ENCODE measurements at regions of chr2 and their contacts with region 1.

Region 1: DNA sequence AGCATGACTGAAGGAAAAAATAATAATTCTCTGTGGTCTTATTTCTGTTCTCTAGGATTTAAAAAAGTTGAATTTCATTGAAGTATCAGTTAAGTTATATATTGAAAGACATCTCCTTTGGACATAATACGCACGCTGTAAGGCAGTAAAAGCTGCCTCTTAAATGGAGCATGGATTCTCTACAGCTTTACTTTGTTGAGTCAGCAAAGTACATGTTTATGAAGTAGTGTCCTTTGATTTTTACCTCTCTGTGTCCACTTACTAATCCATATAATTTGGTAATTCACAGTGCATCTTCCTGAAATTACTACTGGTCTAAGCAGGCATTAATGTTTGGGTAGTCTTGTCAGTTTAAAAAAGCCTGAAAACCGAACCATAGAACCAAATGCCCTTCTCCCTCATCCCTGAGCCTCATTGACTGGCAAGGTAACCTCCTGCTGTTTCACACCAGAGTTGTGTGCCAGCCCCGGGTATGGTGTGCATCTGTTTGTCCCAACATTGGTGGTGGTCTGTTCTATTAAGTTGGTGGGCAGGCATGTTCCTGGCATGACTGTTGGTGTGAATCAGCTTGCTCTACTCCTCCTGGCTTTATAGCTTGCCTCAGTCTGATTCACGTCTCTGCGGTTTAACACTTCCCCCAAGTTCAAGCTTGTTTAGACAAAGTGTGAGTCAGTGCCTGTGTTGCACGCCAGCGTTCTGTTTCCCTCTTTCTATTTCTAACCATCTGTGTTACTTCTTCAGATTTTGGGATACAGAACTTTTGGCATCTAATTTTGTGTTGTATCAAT is 71.0 kb upstream of the ITM2C start:
- DNase-seq: peak; percentile 62 to 90
- ATAC-seq: peak; percentile 91 to 98 (median 97)
- H3K4me3 ChIP-seq: no peak overlapping the region
- H3K4me3 Mint-ChIP-seq: peak overlapping the region; percentile 80
- H3K27ac ChIP-seq: peak overlapping the region; percentile 36
- H3K27ac Mint-ChIP-seq: peak overlapping the region; percentile 72 to 79
- H3K4me1 ChIP-seq: peaks cover 21% of the 10 kb centered on the region
- H3K4me1 Mint-ChIP-seq: peaks cover 51% of the 10 kb centered on the region in 2 donors
- H3K27me3 ChIP-seq: no peaks in the 10 kb centered on the region
- H3K27me3 Mint-ChIP-seq: no peaks in the 10 kb centered on the region
- CTCF ChIP-seq: no peak

Region 2: GRCh38 chr2:230712443-230713330 is 81.1 kb before region 1 on chr2 and contains the start of gene CAB39:
- intact Hi-C with region 1: loop called (anchors 1 kb)
- DNase-seq: peak; percentile 88 to 95
- ATAC-seq: peak; percentile 86 to 96 (median 92)
- H3K4me3 ChIP-seq: peak within 1 kb of the TSS; percentile 81
- H3K4me3 Mint-ChIP-seq: peak within 1 kb of the TSS; percentile 98
- H3K27ac ChIP-seq: peak within 1 kb of the TSS; percentile 59
- H3K27ac Mint-ChIP-seq: peak within 1 kb of the TSS; percentile 92 to 95
- H3K4me1 ChIP-seq: peaks cover 35% of the 10 kb centered on the region
- H3K4me1 Mint-ChIP-seq: peaks cover 40 to 46% of the 10 kb centered on the region in 2 donors
- H3K27me3 ChIP-seq: no peaks in the 10 kb centered on the region
- H3K27me3 Mint-ChIP-seq: no peaks in the 10 kb centered on the region
- CTCF ChIP-seq: peak; percentile 75
- total RNA-seq, gene CAB39: 75.4 to 96.5 (median 90.5) TPM

Region 3: DNA sequence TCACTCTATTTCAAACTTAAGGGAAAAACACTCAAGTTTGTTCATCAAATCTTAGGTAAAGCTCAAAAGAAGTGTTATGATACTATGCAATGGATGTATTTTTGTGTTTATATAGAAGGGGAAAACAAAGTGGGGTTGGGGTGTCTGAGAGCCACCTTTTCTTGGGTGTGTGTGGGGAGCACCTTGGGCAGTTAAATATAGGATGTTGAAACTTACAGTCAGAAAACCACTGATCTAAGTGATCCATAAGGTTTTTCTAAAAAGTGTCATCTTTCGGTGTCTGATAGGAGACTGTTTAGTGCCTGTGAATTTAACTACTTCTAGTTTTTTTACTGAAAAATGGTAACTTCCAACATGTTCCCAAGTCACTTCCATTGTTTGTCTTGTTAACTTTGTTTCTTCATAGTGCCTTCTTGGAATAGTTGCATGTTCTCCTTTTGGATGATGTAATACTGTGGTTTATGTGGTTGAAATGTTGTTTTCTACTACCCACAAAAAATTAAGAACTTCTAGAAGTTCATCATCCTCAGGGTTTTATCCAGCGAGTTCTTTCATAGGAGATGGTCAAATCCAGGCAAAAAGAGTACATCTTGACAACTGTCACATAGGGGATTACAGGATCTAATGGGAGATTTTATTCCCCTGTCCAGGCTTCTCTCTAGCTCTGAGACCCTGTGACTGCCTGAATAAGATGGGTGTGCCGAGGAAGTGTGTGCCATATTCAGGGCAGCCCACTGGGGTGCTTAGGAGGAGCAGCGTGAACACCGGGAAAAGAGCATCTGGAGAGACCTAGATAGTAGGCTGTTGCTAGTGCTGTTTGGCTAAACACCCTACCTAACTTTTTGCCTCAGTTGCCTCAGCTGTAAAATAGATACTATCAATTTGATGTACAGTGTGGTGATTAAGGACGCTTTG is 34.9 kb before region 1 on chr2:
- intact Hi-C with region 1: loop called (anchors 2 kb)
- DNase-seq: no peak
- ATAC-seq: no peak
- H3K4me3 ChIP-seq: no peak overlapping the region
- H3K4me3 Mint-ChIP-seq: peak overlapping the region; percentile 63
- H3K27ac ChIP-seq: no peak overlapping the region
- H3K27ac Mint-ChIP-seq: peak overlapping the region; percentile 45 to 84
- H3K4me1 ChIP-seq: peaks cover 30% of the 10 kb centered on the region
- H3K4me1 Mint-ChIP-seq: peaks cover 61 to 65% of the 10 kb centered on the region in 2 donors
- H3K27me3 ChIP-seq: no peaks in the 10 kb centered on the region
- H3K27me3 Mint-ChIP-seq: no peaks in the 10 kb centered on the region
- CTCF ChIP-seq: no peak

Region 4: DNA sequence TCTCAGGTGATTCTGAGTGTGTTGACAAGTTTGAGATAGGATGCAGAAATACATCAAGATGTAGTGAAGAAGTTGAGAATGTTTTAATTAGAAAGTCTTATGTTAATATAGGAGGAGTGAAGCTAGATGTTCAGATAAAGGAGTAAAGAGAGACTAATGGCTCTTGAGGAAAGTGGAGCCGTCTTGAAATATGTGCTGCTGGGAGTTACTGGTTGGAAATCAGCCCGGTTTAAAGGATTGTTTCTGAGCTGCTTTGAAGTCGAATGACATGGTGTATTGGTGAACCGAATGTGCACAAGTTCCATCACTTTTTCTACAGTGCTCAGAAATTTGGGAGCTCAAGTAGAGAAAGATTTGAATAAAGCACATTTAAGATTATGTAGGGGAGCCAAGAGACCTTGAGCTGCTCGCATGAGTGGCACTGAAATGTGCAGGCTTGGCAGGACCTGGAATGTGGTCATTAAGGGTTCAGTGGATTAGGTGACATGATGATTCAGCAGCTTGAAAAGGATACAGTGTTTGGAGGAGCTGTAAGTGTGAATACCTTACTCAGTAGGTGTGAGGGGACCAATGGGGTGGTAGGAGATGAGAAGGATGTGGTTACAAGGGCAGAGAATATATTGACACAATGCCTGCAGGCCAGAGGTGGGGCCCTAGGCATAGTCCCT is 12.5 kb before region 1 on chr2:
- intact Hi-C with region 1: loop called (anchors 1 kb)
- DNase-seq: peak; percentile 51 to 76
- ATAC-seq: peak; percentile 91 to 96 (median 93)
- H3K4me3 ChIP-seq: no peak overlapping the region
- H3K4me3 Mint-ChIP-seq: peak overlapping the region; percentile 67
- H3K27ac ChIP-seq: no peak overlapping the region
- H3K27ac Mint-ChIP-seq: peak overlapping the region; percentile 54 to 67
- H3K4me1 ChIP-seq: peaks cover 46% of the 10 kb centered on the region
- H3K4me1 Mint-ChIP-seq: peaks cover 69 to 82% of the 10 kb centered on the region in 2 donors
- H3K27me3 ChIP-seq: no peaks in the 10 kb centered on the region
- H3K27me3 Mint-ChIP-seq: no peaks in the 10 kb centered on the region
- CTCF ChIP-seq: no peak

Region 5: DNA sequence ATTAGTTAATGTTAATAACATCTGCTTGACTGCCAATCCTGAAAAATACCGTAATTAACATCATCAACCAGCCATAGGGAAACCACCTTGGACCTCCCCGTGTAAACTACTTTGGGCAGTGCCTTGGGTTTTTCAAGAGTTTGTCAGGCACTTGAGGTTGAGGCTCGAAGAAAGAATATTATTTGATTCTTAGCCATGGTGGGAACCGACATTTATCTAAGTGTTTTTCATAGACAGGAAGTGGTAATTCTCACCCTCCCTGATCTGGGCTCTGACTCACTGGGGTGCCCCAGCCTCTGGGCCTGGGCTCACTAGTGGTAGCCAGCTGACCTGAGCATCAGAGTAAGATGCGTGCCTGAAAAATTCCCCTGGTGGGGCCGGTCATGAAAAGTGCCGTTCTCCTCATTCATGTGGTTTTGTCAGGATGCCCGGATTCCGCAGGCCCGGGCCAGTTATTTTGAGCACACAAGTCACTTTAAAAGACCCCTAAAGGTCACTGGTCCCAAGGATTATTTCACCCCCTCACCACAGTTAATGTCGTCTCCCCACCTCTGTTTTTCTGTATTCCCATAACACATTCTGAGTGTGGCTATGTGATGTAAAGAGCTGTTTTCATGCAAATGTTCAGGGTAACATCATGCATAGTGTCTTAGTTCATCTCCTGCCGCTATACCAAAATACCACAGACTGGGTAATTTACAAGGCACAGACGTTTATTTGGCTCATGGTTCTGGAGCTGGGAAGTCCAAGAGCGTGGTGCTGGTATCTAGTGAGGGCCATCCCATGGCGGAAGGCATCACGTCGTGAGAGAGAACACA is 180.5 kb after region 1 on chr2:
- intact Hi-C with region 1: loop called (anchors 1 kb)
- DNase-seq: peak; percentile 78 to 91
- ATAC-seq: peak; percentile 87 to 96 (median 93)
- H3K4me3 ChIP-seq: no peak overlapping the region
- H3K4me3 Mint-ChIP-seq: peak overlapping the region; percentile 81
- H3K27ac ChIP-seq: peak overlapping the region; percentile 77
- H3K27ac Mint-ChIP-seq: peak overlapping the region; percentile 96 to 97
- H3K4me1 ChIP-seq: peaks cover 43% of the 10 kb centered on the region
- H3K4me1 Mint-ChIP-seq: peaks cover 22 to 41% of the 10 kb centered on the region in 2 donors
- H3K27me3 ChIP-seq: no peaks in the 10 kb centered on the region
- H3K27me3 Mint-ChIP-seq: peaks cover 25 to 47% of the 10 kb centered on the region in 2 donors
- CTCF ChIP-seq: no peak